Naive thymus-derived CD4-positive, alpha-beta T cell (primary cell): ENCODE measurements at regions of chr12 and their contacts with region 1.

Region 1: GRCh38 chr12:54549774-54550451 is 512 bp downstream of the PDE1B start:
- DNase-seq: peak in 6 of 9 donors; percentile 4 to 28 (median 19)
- ATAC-seq: peak; percentile 51
- H3K4me3 ChIP-seq: peak overlapping the region; percentile 58
- H3K4me3 Mint-ChIP-seq: peak overlapping the region; percentile 82 to 92 (median 88)
- H3K27ac ChIP-seq: peak overlapping the region; percentile 17
- H3K27ac Mint-ChIP-seq: peak overlapping the region in 7 of 9 donors; percentile 25 to 92 (median 78)
- H3K4me1 ChIP-seq: peaks cover 6 to 10% of the 10 kb centered on the region in 2 donors
- H3K4me1 Mint-ChIP-seq: peaks cover 21 to 46% (median 33%) of the 10 kb centered on the region in 7 donors
- H3K27me3 ChIP-seq: no peaks in the 10 kb centered on the region
- H3K27me3 Mint-ChIP-seq: peaks cover 0 to 16% (median 0%) of the 10 kb centered on the region in 5 donors

Region 2: GRCh38 chr12:54497883-54498282 is 52.0 kb before region 1 on chr12:
- CTCF ChIA-PET with region 1: no interaction called
- POLR2A ChIA-PET with region 1: interaction called, 3 read pairs
- intact Hi-C with region 1: loop called in 1 of 2 experiments (anchors 5 kb)
- DNase-seq: no peak
- ATAC-seq: peak; percentile 3
- H3K4me3 ChIP-seq: peak overlapping the region; percentile 89
- H3K4me3 Mint-ChIP-seq: peak overlapping the region; percentile 97 to 99 (median 98)
- H3K27ac ChIP-seq: peak overlapping the region; percentile 77
- H3K27ac Mint-ChIP-seq: peak overlapping the region; percentile 88 to 98 (median 96)
- H3K4me1 ChIP-seq: peaks cover 19 to 31% of the 10 kb centered on the region in 2 donors
- H3K4me1 Mint-ChIP-seq: peaks cover 30 to 58% (median 41%) of the 10 kb centered on the region in 7 donors
- H3K27me3 ChIP-seq: no peaks in the 10 kb centered on the region
- H3K27me3 Mint-ChIP-seq: no peaks in the 10 kb centered on the region

Region 3: GRCh38 chr12:54535474-54535873 is 14.4 kb before region 1 on chr12:
- CTCF ChIA-PET with region 1: no interaction called
- POLR2A ChIA-PET with region 1: no interaction called
- intact Hi-C with region 1: loop called in 1 of 2 experiments (anchors 2 kb)
- DNase-seq: no peak
- ATAC-seq: no peak
- H3K4me3 ChIP-seq: no peak overlapping the region
- H3K4me3 Mint-ChIP-seq: no peak overlapping the region
- H3K27ac ChIP-seq: peak overlapping the region; percentile 20
- H3K27ac Mint-ChIP-seq: peak overlapping the region in 4 of 9 donors; percentile 2 to 52 (median 23)
- H3K4me1 ChIP-seq: no peaks in the 10 kb centered on the region
- H3K4me1 Mint-ChIP-seq: peaks cover 0 to 6% (median 0%) of the 10 kb centered on the region in 7 donors
- H3K27me3 ChIP-seq: no peaks in the 10 kb centered on the region
- H3K27me3 Mint-ChIP-seq: no peaks in the 10 kb centered on the region